PC-3 (cell line): ENCODE measurements at regions of chr4 and their contacts with region 1.

Region 1: GRCh38 chr4:17447675-17448298 is 64.1 kb downstream of the QDPR start:
- DNase-seq: peak; percentile 74
- ATAC-seq: peak; percentile 96
- H3K4me3 ChIP-seq: no peak overlapping the region
- H3K27ac ChIP-seq: no peak overlapping the region
- H3K4me1 ChIP-seq: peaks cover 4% of the 10 kb centered on the region; the same call in 1 of the 2 replicates
- H3K27me3 ChIP-seq: no peaks in the 10 kb centered on the region
- CTCF ChIP-seq: peak; percentile 74

Region 2: GRCh38 chr4:17347445-17347844 is 100.3 kb before region 1 on chr4:
- CTCF ChIA-PET with region 1: no interaction called
- POLR2A ChIA-PET with region 1: no interaction called
- intact Hi-C with region 1: loop called (anchors 1 kb)
- DNase-seq: peak; percentile 28
- ATAC-seq: no peak
- H3K4me3 ChIP-seq: no peak overlapping the region
- H3K27ac ChIP-seq: no peak overlapping the region
- H3K4me1 ChIP-seq: no peaks in the 10 kb centered on the region
- H3K27me3 ChIP-seq: peaks cover 7% of the 10 kb centered on the region; the same call in 1 of the 2 replicates
- CTCF ChIP-seq: peak; percentile 64